Activated CD8-positive, alpha-beta T cell treated with anti-CD3 and anti-CD28 coated beads for 36 hours (primary cell): ENCODE measurements at regions of chr5 and their contacts with region 1.

Region 1: DNA sequence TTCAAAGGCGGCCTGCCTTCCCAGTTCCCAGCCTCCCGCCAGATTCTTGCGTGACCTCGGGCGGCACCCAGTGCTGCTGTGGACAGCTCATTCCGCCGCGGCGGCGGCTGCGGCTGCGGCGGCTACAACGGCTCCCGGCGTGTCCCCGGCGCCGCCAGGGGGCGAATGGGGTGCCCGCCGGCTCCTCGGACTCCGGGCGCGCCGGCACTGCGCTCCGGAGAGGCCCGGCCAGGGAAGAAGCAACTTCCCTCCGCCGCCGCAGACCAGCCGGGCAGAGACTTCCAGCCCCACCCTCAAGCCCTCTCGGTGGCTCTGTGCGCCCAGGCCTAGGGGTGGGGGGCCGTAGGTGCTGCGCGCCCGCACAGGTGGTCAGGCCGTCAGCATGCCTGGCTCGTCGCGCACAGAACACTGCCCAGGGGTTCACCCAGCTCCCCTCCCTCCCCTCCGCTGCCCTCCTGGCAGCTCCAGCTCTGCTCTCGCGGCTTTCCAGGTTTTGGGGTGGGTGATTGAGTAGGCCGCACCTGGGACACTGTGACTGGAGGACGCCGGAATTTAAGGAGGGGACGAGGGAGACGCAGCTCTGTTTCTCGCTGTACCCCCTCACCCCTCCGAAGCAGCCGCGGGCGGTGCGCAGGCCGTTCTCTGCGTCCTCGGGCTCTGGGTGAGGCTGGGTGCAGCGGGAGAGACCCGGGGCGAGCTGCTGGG is 20.2 kb downstream of the IGIP start:
- DNase-seq: peak; percentile 58
- ATAC-seq: peak; percentile 76
- H3K4me3 Mint-ChIP-seq: peak overlapping the region; percentile 38
- H3K27ac Mint-ChIP-seq: no peak overlapping the region
- H3K4me1 Mint-ChIP-seq: peaks cover 17% of the 10 kb centered on the region
- H3K27me3 Mint-ChIP-seq: peaks cover 22% of the 10 kb centered on the region
- CTCF ChIP-seq: peak; percentile 78

Region 2: GRCh38 chr5:139904816-139905661 is 240.9 kb before region 1 on chr5:
- CTCF ChIA-PET with region 1: no interaction called
- POLR2A ChIA-PET with region 1: no interaction called
- intact Hi-C with region 1: no loop called
- DNase-seq: no peak
- ATAC-seq: no peak
- H3K4me3 Mint-ChIP-seq: no peak overlapping the region
- H3K27ac Mint-ChIP-seq: no peak overlapping the region
- H3K4me1 Mint-ChIP-seq: peaks cover 5% of the 10 kb centered on the region
- H3K27me3 Mint-ChIP-seq: peaks cover 22% of the 10 kb centered on the region
- CTCF ChIP-seq: no peak

Region 3: GRCh38 chr5:140042643-140043500 is 103.1 kb before region 1 on chr5 and contains the start of gene NRG2:
- CTCF ChIA-PET with region 1: interaction called, 14 read pairs
- POLR2A ChIA-PET with region 1: interaction called, 3 read pairs
- intact Hi-C with region 1: no loop called
- DNase-seq: peak; percentile 47
- ATAC-seq: peak; percentile 81
- H3K4me3 Mint-ChIP-seq: peak within 1 kb of the TSS; percentile 66
- H3K27ac Mint-ChIP-seq: no peak within 1 kb of the TSS
- H3K4me1 Mint-ChIP-seq: peaks cover 8% of the 10 kb centered on the region
- H3K27me3 Mint-ChIP-seq: peaks cover 50% of the 10 kb centered on the region
- CTCF ChIP-seq: peak; percentile 36
- total RNA-seq, gene NRG2: 0.11 TPM in 1 of 2 experiments, not detected in the other

Region 4: DNA sequence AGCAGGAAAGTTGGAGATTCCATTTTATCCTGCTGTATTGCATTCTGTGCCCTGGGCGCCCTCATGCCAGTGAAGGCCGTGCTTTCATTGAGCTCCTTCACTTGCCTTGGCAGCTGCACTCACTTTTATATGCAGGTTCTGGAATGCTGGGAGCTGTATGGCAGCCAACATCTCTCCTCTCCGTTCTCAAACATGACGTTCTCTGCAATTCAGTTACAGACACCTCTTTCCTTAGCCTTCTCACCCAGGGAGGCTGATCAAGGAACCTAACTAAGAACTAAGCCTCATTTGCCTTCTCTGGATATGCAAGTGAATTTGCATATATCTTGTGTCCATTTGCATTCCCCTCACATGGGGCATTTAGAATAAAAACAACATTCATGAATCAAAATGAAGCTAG is 61.4 kb before region 1 on chr5:
- CTCF ChIA-PET with region 1: interaction called, 16 read pairs
- POLR2A ChIA-PET with region 1: no interaction called
- intact Hi-C with region 1: no loop called
- DNase-seq: no peak
- ATAC-seq: no peak
- H3K4me3 Mint-ChIP-seq: no peak overlapping the region
- H3K27ac Mint-ChIP-seq: no peak overlapping the region
- H3K4me1 Mint-ChIP-seq: peaks cover 2% of the 10 kb centered on the region
- H3K27me3 Mint-ChIP-seq: peaks cover 16% of the 10 kb centered on the region
- CTCF ChIP-seq: no peak

Region 5: GRCh38 chr5:140107312-140108083 is 38.5 kb before region 1 on chr5:
- CTCF ChIA-PET with region 1: interaction called, 91 read pairs
- POLR2A ChIA-PET with region 1: no interaction called
- intact Hi-C with region 1: no loop called
- DNase-seq: peak; percentile 93
- ATAC-seq: peak; percentile 91
- H3K4me3 Mint-ChIP-seq: peak overlapping the region; percentile 99
- H3K27ac Mint-ChIP-seq: peak overlapping the region; percentile 91
- H3K4me1 Mint-ChIP-seq: peaks cover 39% of the 10 kb centered on the region
- H3K27me3 Mint-ChIP-seq: peaks cover 22% of the 10 kb centered on the region
- CTCF ChIP-seq: peak; percentile 15

Region 6: GRCh38 chr5:140125637-140126036 is 20.3 kb before region 1 on chr5 and contains the start of gene IGIP:
- CTCF ChIA-PET with region 1: interaction called, 76 read pairs
- POLR2A ChIA-PET with region 1: interaction called, 3 read pairs
- intact Hi-C with region 1: no loop called
- DNase-seq: no peak
- ATAC-seq: no peak
- H3K4me3 Mint-ChIP-seq: no peak within 1 kb of the TSS
- H3K27ac Mint-ChIP-seq: no peak within 1 kb of the TSS
- H3K4me1 Mint-ChIP-seq: peaks cover 30% of the 10 kb centered on the region
- H3K27me3 Mint-ChIP-seq: no peaks in the 10 kb centered on the region
- CTCF ChIP-seq: no peak
- total RNA-seq, gene IGIP: 1.3 to 1.5 TPM

Region 7: GRCh38 chr5:140162781-140163180 is 16.8 kb after region 1 on chr5:
- CTCF ChIA-PET with region 1: interaction called, 28 read pairs
- POLR2A ChIA-PET with region 1: interaction called, 3 read pairs
- intact Hi-C with region 1: no loop called
- DNase-seq: no peak
- ATAC-seq: no peak
- H3K4me3 Mint-ChIP-seq: no peak overlapping the region
- H3K27ac Mint-ChIP-seq: no peak overlapping the region
- H3K4me1 Mint-ChIP-seq: no peaks in the 10 kb centered on the region
- H3K27me3 Mint-ChIP-seq: no peaks in the 10 kb centered on the region
- CTCF ChIP-seq: no peak